Adrenal gland (tissue), 19 donors: ENCODE measurements at regions of chr14 and their contacts with region 1.

Region 1: GRCh38 chr14:69574263-69574953 is at the start of gene CCDC177:
- DNase-seq: peak; percentile 30 to 82 (median 62)
- H3K4me3 ChIP-seq: peak within 1 kb of the TSS in 1 of 4 donors; percentile 13
- H3K27ac ChIP-seq: no peak within 1 kb of the TSS
- H3K4me1 ChIP-seq: peaks cover 5 to 28% of the 10 kb centered on the region in 2 donors
- H3K27me3 ChIP-seq: peaks cover 63% of the 10 kb centered on the region
- CTCF ChIP-seq: peak; percentile 74 to 89 (median 84)
- POLR2A ChIP-seq: no peak
- total RNA-seq, gene CCDC177: 0.04 to 0.61 (median 0.30) TPM in 7 of 9 donors, not detected in the others

Region 2: GRCh38 chr14:69535230-69535848 is 39.1 kb before region 1 on chr14:
- intact Hi-C with region 1: loop called (anchors 2 to 5 kb)
- DNase-seq: peak; percentile 47 to 77 (median 56)
- H3K4me3 ChIP-seq: no peak overlapping the region
- H3K27ac ChIP-seq: no peak overlapping the region
- H3K4me1 ChIP-seq: peaks cover 0 to 2% of the 10 kb centered on the region in 2 donors
- H3K27me3 ChIP-seq: peaks cover 5% of the 10 kb centered on the region
- CTCF ChIP-seq: peak; percentile 40 to 71 (median 60)
- POLR2A ChIP-seq: no peak